ENCODE measurements at regions of chr17 and their contacts with region 1.

Region 1: DNA sequence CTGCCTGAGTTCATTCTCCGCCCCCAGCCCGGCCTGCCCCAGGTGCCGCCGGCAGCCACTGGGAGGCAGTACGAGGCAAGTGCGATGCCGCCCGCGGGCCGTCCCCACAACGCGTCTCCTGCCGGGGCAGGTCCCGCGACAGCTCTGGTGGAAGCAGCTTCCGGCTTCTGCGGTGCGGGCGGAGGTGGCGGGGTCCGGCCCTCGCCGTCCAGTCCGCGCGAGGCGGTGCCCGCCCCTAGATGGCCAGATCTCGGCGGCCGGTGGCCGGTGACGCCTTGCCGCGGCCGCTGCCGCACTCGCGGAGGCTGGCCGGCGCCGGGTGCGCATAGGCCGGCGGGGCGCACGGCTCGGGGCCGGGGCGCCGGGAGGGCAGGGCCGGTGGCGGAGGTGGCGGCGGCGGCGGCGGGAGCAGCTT is 1.8 kb downstream of the GJD3 start:
- DNase-seq: peak; percentile 90
- ATAC-seq: peak; percentile 90
- H3K4me3 Mint-ChIP-seq: peak overlapping the region; percentile 68
- H3K27ac Mint-ChIP-seq: no peak overlapping the region
- H3K4me1 Mint-ChIP-seq: peaks cover 16% of the 10 kb centered on the region
- H3K27me3 Mint-ChIP-seq: peaks cover 31% of the 10 kb centered on the region

Region 2: GRCh38 chr17:40287494-40288369 is 75.0 kb before region 1 on chr17 and contains the start of gene CDC6:
- CTCF ChIA-PET with region 1: interaction called, 433 read pairs
- DNase-seq: peak; percentile 100
- ATAC-seq: peak; percentile 94
- H3K4me3 Mint-ChIP-seq: peak within 1 kb of the TSS; percentile 99
- H3K27ac Mint-ChIP-seq: peak within 1 kb of the TSS; percentile 98
- H3K4me1 Mint-ChIP-seq: peaks cover 56% of the 10 kb centered on the region
- H3K27me3 Mint-ChIP-seq: no peaks in the 10 kb centered on the region
- total RNA-seq, gene CDC6: 109 to 111 TPM

Region 3: GRCh38 chr17:40417609-40418427 is 55.1 kb after region 1 on chr17 and contains the start of gene TOP2A:
- CTCF ChIA-PET with region 1: interaction called, 20 read pairs
- DNase-seq: peak; percentile 98
- ATAC-seq: peak; percentile 98
- H3K4me3 Mint-ChIP-seq: peak within 1 kb of the TSS; percentile 89
- H3K27ac Mint-ChIP-seq: peak within 1 kb of the TSS; percentile 95
- H3K4me1 Mint-ChIP-seq: peaks cover 28% of the 10 kb centered on the region
- H3K27me3 Mint-ChIP-seq: peaks cover 6% of the 10 kb centered on the region
- total RNA-seq, gene TOP2A: 310 to 347 TPM

Region 4: GRCh38 chr17:40443583-40444327 is 81.1 kb after region 1 on chr17:
- CTCF ChIA-PET with region 1: interaction called, 15 read pairs
- DNase-seq: peak; percentile 77
- ATAC-seq: peak; percentile 87
- H3K4me3 Mint-ChIP-seq: peak overlapping the region; percentile 66
- H3K27ac Mint-ChIP-seq: peak overlapping the region; percentile 87
- H3K4me1 Mint-ChIP-seq: peaks cover 44% of the 10 kb centered on the region
- H3K27me3 Mint-ChIP-seq: peaks cover 22% of the 10 kb centered on the region

Region 5: GRCh38 chr17:40485851-40486512 is 123.3 kb after region 1 on chr17:
- CTCF ChIA-PET with region 1: no interaction called
- DNase-seq: no peak
- ATAC-seq: no peak
- H3K4me3 Mint-ChIP-seq: no peak overlapping the region
- H3K27ac Mint-ChIP-seq: no peak overlapping the region
- H3K4me1 Mint-ChIP-seq: peaks cover 46% of the 10 kb centered on the region
- H3K27me3 Mint-ChIP-seq: peaks cover 4% of the 10 kb centered on the region

Region 6: GRCh38 chr17:40499551-40500174 is 137.0 kb after region 1 on chr17:
- CTCF ChIA-PET with region 1: no interaction called
- DNase-seq: no peak
- ATAC-seq: no peak
- H3K4me3 Mint-ChIP-seq: no peak overlapping the region
- H3K27ac Mint-ChIP-seq: no peak overlapping the region
- H3K4me1 Mint-ChIP-seq: no peaks in the 10 kb centered on the region
- H3K27me3 Mint-ChIP-seq: peaks cover 8% of the 10 kb centered on the region

Region 7: DNA sequence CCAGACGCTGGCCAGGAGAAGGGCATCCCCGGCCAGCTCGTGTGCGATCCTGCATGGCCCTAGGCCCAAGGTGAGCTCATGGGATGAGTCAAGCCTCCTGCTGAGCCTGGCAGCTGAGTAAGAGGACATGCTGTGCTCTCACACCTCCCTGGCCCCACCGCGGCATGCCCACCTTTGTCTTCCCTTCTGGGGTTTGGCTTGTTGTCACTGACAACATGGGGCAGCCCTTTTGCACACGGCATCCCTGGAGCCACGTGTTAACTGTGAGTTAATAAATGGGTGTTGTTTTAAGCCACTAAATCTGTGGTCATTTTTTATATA is 147.6 kb after region 1 on chr17:
- CTCF ChIA-PET with region 1: no interaction called
- DNase-seq: no peak
- ATAC-seq: no peak
- H3K4me3 Mint-ChIP-seq: no peak overlapping the region
- H3K27ac Mint-ChIP-seq: no peak overlapping the region
- H3K4me1 Mint-ChIP-seq: peaks cover 17% of the 10 kb centered on the region
- H3K27me3 Mint-ChIP-seq: peaks cover 23% of the 10 kb centered on the region

Region 8: DNA sequence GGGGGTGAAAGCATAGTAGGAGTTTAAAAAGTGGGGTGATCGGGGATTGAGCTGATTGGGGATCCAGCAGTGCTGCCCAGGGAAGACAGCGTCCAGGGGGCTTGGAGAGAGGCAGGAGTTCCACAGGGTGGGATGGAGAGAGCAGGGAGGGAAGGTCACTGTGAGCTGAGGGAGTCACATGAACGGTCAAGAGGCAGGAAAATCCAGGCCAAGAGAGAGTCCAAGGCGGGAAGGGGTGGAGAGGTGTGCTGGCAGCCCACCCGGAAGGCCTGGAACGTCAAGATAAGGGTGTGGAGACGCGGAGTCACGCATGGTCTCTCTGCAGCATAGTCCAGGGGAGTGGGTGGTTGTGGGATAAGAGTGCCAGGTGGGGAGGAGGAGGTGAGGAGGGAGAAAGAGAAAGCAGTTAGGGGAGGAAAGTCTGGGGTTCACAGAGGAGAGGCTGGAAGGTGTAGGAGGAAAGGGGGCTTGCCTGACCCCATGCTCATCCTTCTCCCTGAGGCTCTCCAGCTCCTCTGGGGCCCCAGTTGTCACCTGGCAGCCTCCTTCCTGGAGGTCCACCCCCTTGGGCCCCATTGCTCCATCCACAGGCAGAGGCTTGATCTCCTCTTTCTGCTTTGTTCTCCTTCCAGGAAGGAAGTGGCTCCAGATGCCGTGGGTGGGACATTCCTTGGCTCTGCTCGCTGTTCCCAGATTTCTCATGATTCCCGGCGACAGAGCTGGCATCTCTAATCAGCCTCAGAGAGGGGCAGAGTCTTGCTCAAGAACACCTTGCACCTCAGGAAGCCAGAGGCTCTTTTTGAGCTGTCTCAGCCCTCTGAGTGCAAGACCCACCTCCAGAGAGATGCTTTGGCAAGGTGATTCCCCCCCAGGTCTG is 173.8 kb after region 1 on chr17:
- CTCF ChIA-PET with region 1: interaction called, 218 read pairs
- DNase-seq: no peak
- ATAC-seq: no peak
- H3K4me3 Mint-ChIP-seq: no peak overlapping the region
- H3K27ac Mint-ChIP-seq: no peak overlapping the region
- H3K4me1 Mint-ChIP-seq: peaks cover 80% of the 10 kb centered on the region
- H3K27me3 Mint-ChIP-seq: peaks cover 12% of the 10 kb centered on the region

Region 9: DNA sequence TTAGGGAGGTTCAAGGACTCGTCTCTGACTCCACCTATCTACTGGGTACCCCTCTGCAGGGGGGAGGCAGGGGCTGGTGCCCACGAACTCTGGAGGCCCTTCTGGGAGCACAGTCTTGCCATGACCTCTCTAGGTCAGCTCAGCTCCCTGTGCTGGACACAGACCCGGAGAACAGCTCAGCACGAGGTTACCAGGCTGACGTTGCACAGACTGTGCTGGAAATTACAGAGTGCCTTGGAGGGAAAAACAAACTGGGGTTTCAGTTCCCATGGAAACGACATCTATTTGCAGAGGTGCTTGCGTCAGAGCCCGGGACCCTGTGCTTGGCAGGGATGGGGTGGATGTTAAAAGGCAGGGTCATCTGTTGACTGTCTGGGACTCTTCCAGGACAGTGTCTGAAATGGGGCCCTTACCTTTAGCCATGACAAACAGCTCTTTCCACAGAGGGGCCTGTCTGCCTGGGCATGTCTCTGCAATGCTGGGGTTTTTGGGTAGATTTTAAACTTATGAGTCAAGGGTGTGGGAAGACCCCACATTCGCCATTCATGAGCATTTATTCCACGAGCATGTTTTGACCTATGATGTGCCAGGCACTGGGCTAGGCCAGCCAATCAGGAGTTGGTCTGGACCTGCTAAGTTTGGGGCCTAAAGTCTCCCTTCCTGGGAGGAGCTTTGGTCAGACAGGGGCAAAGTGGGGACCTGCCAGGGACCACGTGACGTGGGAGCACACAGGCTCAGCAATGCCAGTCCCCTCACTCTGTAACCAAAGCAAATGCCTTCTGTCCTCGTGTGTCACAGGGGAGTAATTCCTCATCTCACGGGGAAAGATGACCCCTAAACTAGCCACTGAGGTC is 180.1 kb after region 1 on chr17:
- CTCF ChIA-PET with region 1: interaction called, 218 read pairs
- DNase-seq: peak; percentile 49
- ATAC-seq: peak; percentile 6
- H3K4me3 Mint-ChIP-seq: no peak overlapping the region
- H3K27ac Mint-ChIP-seq: peak overlapping the region; percentile 52
- H3K4me1 Mint-ChIP-seq: peaks cover 71% of the 10 kb centered on the region
- H3K27me3 Mint-ChIP-seq: peaks cover 3% of the 10 kb centered on the region

Region 10: GRCh38 chr17:40548982-40549685 is 186.4 kb after region 1 on chr17:
- CTCF ChIA-PET with region 1: interaction called, 10 read pairs
- DNase-seq: no peak
- ATAC-seq: no peak
- H3K4me3 Mint-ChIP-seq: no peak overlapping the region
- H3K27ac Mint-ChIP-seq: peak overlapping the region; percentile 20
- H3K4me1 Mint-ChIP-seq: peaks cover 73% of the 10 kb centered on the region
- H3K27me3 Mint-ChIP-seq: no peaks in the 10 kb centered on the region